HCT116 (cell line): ENCODE measurements at regions of chr3 and their contacts with region 1.

Region 1: GRCh38 chr3:11060500-11061251 is 68.1 kb downstream of the SLC6A1 start:
- DNase-seq: peak; percentile 50
- ATAC-seq: peak; percentile 87
- H3K4me3 ChIP-seq: peak overlapping the region in 1 of 2 experiments; percentile 25; a peak in 2 of 4 replicates
- H3K27ac ChIP-seq: no peak overlapping the region; the same call in 1 of the 2 replicates
- H3K4me1 ChIP-seq: peaks cover 3 to 10% of the 10 kb centered on the region in 2 experiments; a peak in 2 of 4 replicates
- H3K27me3 ChIP-seq: peaks cover 5% of the 10 kb centered on the region; the same call in 1 of the 2 replicates
- CTCF ChIP-seq: peak; percentile 84 to 91 (median 84)
- POLR2A ChIP-seq: no peak
- RAD21 ChIP-seq: peak; percentile 98

Region 2: DNA sequence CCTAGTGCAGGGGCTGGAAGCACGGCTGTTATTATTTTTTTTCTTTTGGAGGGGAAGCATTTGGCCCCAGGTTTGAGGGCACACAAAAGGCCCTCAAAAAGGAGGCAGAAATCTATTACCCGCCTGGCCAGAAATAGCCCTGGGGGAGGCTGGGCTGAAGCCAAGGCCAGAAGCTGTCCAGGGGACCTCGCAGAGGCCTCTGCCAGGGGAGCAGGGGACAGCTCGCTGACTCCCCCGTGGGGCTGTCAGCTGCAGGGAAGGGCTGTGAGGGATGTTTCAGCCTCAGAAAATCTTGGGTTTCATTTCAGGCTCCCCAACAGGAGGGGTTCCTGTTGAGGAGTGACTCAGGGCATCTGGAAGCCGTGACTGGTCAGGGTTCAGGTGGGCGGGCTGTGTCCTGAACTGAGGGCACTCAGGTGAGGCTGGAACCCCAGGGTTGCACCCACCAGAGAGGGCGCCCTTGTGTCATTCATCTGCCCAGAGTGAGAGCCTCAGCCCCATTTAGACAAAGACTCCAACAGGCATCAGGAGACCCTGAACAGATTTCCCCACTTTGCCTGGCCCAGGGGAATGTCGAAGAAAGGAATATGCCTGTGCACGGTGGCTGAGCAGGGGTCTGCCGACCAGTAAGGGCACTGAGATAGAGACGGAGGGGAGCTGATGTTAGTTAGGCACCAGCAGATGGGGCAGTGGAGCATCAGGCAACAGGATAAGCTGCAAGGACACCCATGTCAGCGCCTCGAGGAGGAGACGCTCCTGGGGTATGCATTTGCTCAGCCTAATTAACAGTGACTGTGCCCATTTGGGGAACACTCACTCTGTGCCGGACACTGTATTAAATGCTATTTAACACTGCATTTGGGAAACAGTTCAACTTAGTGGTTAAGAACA is 288.2 kb before region 1 on chr3:
- CTCF ChIA-PET with region 1: interaction called, 17 read pairs
- POLR2A ChIA-PET with region 1: no interaction called
- RAD21 ChIA-PET with region 1: interaction called in 1 of 2 experiments, 3 read pairs
- intact Hi-C with region 1: no loop called
- DNase-seq: no peak
- ATAC-seq: peak; percentile 94
- H3K4me3 ChIP-seq: no peak overlapping the region
- H3K27ac ChIP-seq: no peak overlapping the region
- H3K4me1 ChIP-seq: peaks cover 0 to 6% of the 10 kb centered on the region in 2 experiments; a peak in 2 of 4 replicates
- H3K27me3 ChIP-seq: peaks cover 13% of the 10 kb centered on the region; the same call in 1 of the 2 replicates
- CTCF ChIP-seq: peak; percentile 70 to 99 (median 90)
- POLR2A ChIP-seq: no peak
- RAD21 ChIP-seq: peak; percentile 60

Region 3: DNA sequence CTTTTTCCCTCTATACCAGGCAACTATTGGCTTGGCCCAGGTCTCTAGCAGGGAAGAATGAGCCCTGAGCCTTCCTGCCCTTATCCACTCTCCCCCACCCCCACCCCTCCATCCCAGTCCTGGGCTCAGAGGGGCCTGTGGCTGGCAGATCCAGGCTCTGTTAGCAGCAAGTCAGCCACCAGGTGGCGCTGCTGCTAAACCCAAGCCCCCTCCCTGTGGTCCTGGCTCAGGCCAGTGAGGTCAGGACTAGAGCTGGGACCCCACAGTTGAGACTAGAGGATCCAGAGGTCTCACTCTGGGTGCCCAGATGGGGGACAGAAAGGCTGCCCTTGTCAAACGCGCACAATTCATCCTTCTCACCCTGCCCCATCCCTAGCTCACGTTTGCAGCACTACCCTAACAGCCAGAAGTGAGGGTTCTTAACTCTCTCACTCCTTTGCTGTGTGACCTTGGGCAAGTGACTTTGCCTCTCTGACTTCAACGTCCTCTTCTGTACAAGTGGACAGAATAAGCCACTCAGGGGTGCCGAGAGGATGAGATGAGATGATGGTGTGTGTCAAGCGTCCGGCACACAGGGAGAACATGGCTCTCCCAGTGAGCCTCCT is 114.9 kb before region 1 on chr3:
- CTCF ChIA-PET with region 1: interaction called, 21 read pairs
- POLR2A ChIA-PET with region 1: no interaction called
- RAD21 ChIA-PET with region 1: interaction called in 1 of 2 experiments, 5 read pairs
- intact Hi-C with region 1: loop called (anchors 1 kb)
- DNase-seq: peak; percentile 44
- ATAC-seq: peak; percentile 99
- H3K4me3 ChIP-seq: no peak overlapping the region
- H3K27ac ChIP-seq: no peak overlapping the region
- H3K4me1 ChIP-seq: no peaks in the 10 kb centered on the region
- H3K27me3 ChIP-seq: no peaks in the 10 kb centered on the region; the same call in 1 of the 2 replicates
- CTCF ChIP-seq: peak; percentile 79 to 96 (median 88)
- POLR2A ChIP-seq: no peak
- RAD21 ChIP-seq: peak; percentile 83

Region 4: DNA sequence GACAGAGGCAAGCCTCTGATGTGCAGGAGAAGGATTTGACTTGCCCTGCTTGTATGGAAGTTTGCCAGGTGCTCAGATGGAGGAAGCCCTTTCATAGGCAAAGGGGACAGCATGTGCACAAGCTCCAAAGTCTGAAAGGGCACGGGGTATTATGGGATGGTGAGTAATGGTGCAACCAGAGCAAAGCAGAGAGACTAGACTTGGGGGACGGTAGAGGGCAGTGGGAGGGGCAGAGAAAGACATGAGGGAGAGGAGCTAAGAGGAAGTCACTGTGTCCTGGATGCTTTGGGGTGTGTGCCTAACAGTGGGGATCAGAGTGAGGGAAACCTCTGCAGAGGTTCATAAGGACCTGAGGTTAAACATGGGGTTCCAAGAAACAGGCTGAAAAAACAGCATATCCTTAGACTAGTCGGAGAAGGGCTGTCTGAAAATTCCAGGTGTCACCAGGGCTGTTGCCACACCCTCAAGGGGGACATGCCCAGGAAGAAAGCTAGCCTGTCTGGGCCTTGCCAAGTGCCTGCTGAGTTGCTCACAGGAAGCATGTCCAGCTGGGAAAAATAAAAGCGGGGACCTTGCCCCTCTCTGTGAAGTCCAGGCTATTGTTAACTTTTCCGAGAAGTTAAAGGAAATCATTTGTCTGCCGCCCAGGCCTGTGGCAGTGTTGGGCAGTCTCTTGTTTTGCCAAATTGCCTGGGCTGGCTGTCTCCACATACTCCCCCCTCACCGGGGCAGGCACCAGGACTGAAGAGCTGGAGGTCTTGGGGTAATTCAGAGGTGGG is 140.8 kb after region 1 on chr3:
- CTCF ChIA-PET with region 1: interaction called, 19 read pairs
- POLR2A ChIA-PET with region 1: no interaction called
- RAD21 ChIA-PET with region 1: interaction called in 1 of 2 experiments, 7 read pairs
- intact Hi-C with region 1: loop called (anchors 1 kb)
- DNase-seq: no peak
- ATAC-seq: peak; percentile 76
- H3K4me3 ChIP-seq: no peak overlapping the region; a peak in 1 of 4 replicates
- H3K27ac ChIP-seq: peak overlapping the region; percentile 6; the same call in 1 of the 2 replicates
- H3K4me1 ChIP-seq: peaks cover 13 to 39% of the 10 kb centered on the region in 2 experiments
- H3K27me3 ChIP-seq: no peaks in the 10 kb centered on the region
- CTCF ChIP-seq: no peak
- POLR2A ChIP-seq: no peak
- RAD21 ChIP-seq: no peak; the same call in 1 of the 2 replicates

Region 5: DNA sequence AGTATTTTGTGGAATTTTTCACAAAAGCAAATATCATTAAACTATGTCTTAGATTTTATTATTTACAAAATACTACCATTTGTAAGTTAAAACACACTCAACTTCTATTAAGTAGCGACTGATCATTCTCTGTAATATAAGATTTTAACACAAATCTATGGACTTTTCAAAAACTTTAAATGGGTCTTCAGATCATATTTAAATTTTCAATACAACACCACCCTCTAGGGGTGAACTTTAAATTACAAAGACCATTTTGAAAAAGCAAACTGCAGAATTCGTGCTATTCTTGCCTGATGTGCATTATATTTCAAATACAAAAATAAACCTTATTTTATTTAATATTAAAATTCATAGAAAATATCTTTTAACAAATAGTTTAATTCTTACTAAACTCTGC is 591.2 kb after region 1 on chr3:
- CTCF ChIA-PET with region 1: no interaction called
- POLR2A ChIA-PET with region 1: no interaction called
- RAD21 ChIA-PET with region 1: no interaction called
- intact Hi-C with region 1: loop called (anchors 5 kb)
- DNase-seq: peak; percentile 21
- ATAC-seq: no peak
- H3K4me3 ChIP-seq: no peak overlapping the region
- H3K27ac ChIP-seq: no peak overlapping the region
- H3K4me1 ChIP-seq: no peaks in the 10 kb centered on the region
- H3K27me3 ChIP-seq: no peaks in the 10 kb centered on the region
- CTCF ChIP-seq: peak; percentile 24 to 58 (median 54); a peak in 4 of 6 replicates
- POLR2A ChIP-seq: no peak
- RAD21 ChIP-seq: peak; percentile 71